CD8-positive, alpha-beta T cell (primary cell): ENCODE measurements at regions of chr7 and their contacts with region 1.

Region 1: DNA sequence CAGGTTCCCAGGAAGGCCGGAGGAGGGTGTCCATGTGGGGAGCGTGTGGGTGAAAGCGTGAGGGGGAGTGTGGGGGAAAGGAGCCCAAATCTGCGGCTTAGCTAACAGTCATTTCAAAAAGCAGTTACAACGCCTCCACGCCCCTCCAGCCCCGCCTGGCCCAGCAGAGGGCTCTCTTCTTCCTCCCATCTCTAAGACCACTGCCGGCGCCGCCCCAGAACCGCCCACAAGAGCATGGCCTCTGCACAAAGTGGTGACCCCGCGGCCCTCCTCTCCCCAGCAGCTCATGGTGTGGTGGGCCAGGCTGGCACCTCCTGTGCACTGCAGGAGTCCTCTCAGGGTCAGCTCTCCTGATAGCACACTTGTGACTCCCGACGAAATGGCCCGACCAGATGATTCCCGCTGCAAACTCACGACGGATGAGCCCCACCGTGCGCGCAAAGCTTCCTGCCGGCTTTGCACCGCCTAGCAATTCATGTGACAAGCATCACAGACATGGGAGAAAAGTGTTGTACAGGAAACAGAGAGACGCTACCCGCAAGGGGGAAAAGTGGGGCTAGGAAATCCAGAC is 12.4 kb upstream of the HUS1 start:
- DNase-seq: peak; percentile 73 to 92 (median 88)
- ATAC-seq: peak; percentile 95
- H3K4me3 ChIP-seq: peak overlapping the region; percentile 67 to 96
- H3K4me3 Mint-ChIP-seq: peak overlapping the region; percentile 90
- H3K27ac ChIP-seq: peak overlapping the region; percentile 72 to 80
- H3K27ac Mint-ChIP-seq: peak overlapping the region; percentile 93
- H3K4me1 ChIP-seq: peaks cover 17% of the 10 kb centered on the region
- H3K4me1 Mint-ChIP-seq: peaks cover 18% of the 10 kb centered on the region
- H3K27me3 ChIP-seq: no peaks in the 10 kb centered on the region
- H3K27me3 Mint-ChIP-seq: no peaks in the 10 kb centered on the region
- CTCF ChIP-seq: peak; percentile 51

Region 2: GRCh38 chr7:47945261-47946001 is 46.4 kb before region 1 on chr7:
- CTCF ChIA-PET with region 1: interaction called, 15 read pairs
- POLR2A ChIA-PET with region 1: no interaction called
- intact Hi-C with region 1: no loop called
- DNase-seq: peak; percentile 42 to 83 (median 71)
- ATAC-seq: no peak
- H3K4me3 ChIP-seq: no peak overlapping the region
- H3K4me3 Mint-ChIP-seq: no peak overlapping the region
- H3K27ac ChIP-seq: no peak overlapping the region
- H3K27ac Mint-ChIP-seq: no peak overlapping the region
- H3K4me1 ChIP-seq: no peaks in the 10 kb centered on the region
- H3K4me1 Mint-ChIP-seq: no peaks in the 10 kb centered on the region
- H3K27me3 ChIP-seq: no peaks in the 10 kb centered on the region
- H3K27me3 Mint-ChIP-seq: no peaks in the 10 kb centered on the region
- CTCF ChIP-seq: peak; percentile 82

Region 3: GRCh38 chr7:48035301-48035966 is 43.6 kb after region 1 on chr7 and contains the start of gene C7orf57:
- CTCF ChIA-PET with region 1: interaction called, 7 read pairs
- POLR2A ChIA-PET with region 1: no interaction called
- intact Hi-C with region 1: loop called in 1 of 2 experiments (anchors 1 kb)
- DNase-seq: peak; percentile 69 to 91 (median 85)
- ATAC-seq: peak; percentile 86
- H3K4me3 ChIP-seq: peak within 1 kb of the TSS; percentile 57 to 73
- H3K4me3 Mint-ChIP-seq: peak within 1 kb of the TSS; percentile 81
- H3K27ac ChIP-seq: peak within 1 kb of the TSS in 1 of 2 experiments; percentile 37
- H3K27ac Mint-ChIP-seq: no peak within 1 kb of the TSS
- H3K4me1 ChIP-seq: peaks cover 8% of the 10 kb centered on the region
- H3K4me1 Mint-ChIP-seq: peaks cover 10% of the 10 kb centered on the region
- H3K27me3 ChIP-seq: peaks cover 8 to 10% of the 10 kb centered on the region in 2 experiments
- H3K27me3 Mint-ChIP-seq: peaks cover 13% of the 10 kb centered on the region
- CTCF ChIP-seq: no peak
- total RNA-seq, gene C7orf57: not detected

Region 4: GRCh38 chr7:48074204-48074654 is 82.4 kb after region 1 on chr7:
- CTCF ChIA-PET with region 1: no interaction called
- POLR2A ChIA-PET with region 1: no interaction called
- intact Hi-C with region 1: no loop called
- DNase-seq: no peak
- ATAC-seq: no peak
- H3K4me3 ChIP-seq: no peak overlapping the region
- H3K4me3 Mint-ChIP-seq: no peak overlapping the region
- H3K27ac ChIP-seq: no peak overlapping the region
- H3K27ac Mint-ChIP-seq: no peak overlapping the region
- H3K4me1 ChIP-seq: no peaks in the 10 kb centered on the region
- H3K4me1 Mint-ChIP-seq: no peaks in the 10 kb centered on the region
- H3K27me3 ChIP-seq: no peaks in the 10 kb centered on the region
- H3K27me3 Mint-ChIP-seq: no peaks in the 10 kb centered on the region
- CTCF ChIP-seq: no peak

Region 5: GRCh38 chr7:48094751-48095562 is 103.1 kb after region 1 on chr7:
- CTCF ChIA-PET with region 1: interaction called, 50 read pairs
- POLR2A ChIA-PET with region 1: interaction called, 25 read pairs
- intact Hi-C with region 1: no loop called
- DNase-seq: peak in 1 of 9 experiments; percentile 27
- ATAC-seq: no peak
- H3K4me3 ChIP-seq: no peak overlapping the region
- H3K4me3 Mint-ChIP-seq: no peak overlapping the region
- H3K27ac ChIP-seq: peak overlapping the region in 1 of 2 experiments; percentile 84
- H3K27ac Mint-ChIP-seq: peak overlapping the region; percentile 52
- H3K4me1 ChIP-seq: peaks cover 69% of the 10 kb centered on the region
- H3K4me1 Mint-ChIP-seq: peaks cover 80% of the 10 kb centered on the region
- H3K27me3 ChIP-seq: no peaks in the 10 kb centered on the region
- H3K27me3 Mint-ChIP-seq: no peaks in the 10 kb centered on the region
- CTCF ChIP-seq: no peak

Region 6: DNA sequence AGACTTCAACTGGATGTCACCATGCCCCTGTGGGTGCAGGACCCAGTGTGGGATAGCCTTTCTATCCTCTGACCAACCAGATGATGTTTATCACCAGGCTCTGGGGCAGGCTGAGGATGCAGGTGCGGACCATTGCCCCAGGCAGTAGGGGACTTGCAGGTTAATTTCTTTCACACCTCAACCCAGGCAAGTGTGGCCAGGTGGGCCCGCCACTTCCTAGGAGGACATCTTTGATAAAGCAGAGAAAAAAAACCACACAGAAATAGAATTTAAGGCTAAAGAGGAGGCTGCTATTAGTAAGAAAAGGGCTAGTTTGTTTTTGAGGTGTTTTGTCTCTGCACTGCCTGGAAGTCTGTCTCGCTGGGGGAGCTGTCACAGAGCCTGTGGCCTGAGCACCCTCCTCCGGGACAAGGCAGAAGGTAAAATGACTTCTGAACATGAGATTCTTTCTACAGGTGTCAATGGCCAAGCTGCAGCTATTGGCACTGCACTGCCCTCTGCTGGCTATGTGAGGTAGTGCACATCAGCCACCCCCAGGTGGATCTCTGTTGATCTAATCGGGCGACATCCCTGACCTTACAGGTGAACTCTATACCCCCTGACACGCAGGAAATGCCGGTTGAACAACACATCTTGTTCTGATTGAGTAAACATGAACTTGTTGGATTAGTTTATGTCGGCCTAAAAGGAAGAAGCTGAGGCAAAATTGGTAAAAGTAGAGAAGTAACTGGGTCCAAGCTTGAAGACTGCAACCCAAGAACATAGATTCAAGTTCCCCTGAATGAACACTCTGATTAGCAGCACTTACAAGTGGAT is 118.2 kb after region 1 on chr7:
- CTCF ChIA-PET with region 1: interaction called, 127 read pairs
- POLR2A ChIA-PET with region 1: interaction called, 18 read pairs
- intact Hi-C with region 1: loop called (anchors 1 kb)
- DNase-seq: peak; percentile 81 to 97 (median 89)
- ATAC-seq: peak; percentile 98
- H3K4me3 ChIP-seq: no peak overlapping the region
- H3K4me3 Mint-ChIP-seq: no peak overlapping the region
- H3K27ac ChIP-seq: peak overlapping the region in 1 of 2 experiments; percentile 24
- H3K27ac Mint-ChIP-seq: peak overlapping the region; percentile 69
- H3K4me1 ChIP-seq: peaks cover 11% of the 10 kb centered on the region
- H3K4me1 Mint-ChIP-seq: peaks cover 11% of the 10 kb centered on the region
- H3K27me3 ChIP-seq: no peaks in the 10 kb centered on the region
- H3K27me3 Mint-ChIP-seq: no peaks in the 10 kb centered on the region
- CTCF ChIP-seq: peak; percentile 98